PC-9 (cell line): ENCODE measurements at regions of chr4 and their contacts with region 1.

Region 1: DNA sequence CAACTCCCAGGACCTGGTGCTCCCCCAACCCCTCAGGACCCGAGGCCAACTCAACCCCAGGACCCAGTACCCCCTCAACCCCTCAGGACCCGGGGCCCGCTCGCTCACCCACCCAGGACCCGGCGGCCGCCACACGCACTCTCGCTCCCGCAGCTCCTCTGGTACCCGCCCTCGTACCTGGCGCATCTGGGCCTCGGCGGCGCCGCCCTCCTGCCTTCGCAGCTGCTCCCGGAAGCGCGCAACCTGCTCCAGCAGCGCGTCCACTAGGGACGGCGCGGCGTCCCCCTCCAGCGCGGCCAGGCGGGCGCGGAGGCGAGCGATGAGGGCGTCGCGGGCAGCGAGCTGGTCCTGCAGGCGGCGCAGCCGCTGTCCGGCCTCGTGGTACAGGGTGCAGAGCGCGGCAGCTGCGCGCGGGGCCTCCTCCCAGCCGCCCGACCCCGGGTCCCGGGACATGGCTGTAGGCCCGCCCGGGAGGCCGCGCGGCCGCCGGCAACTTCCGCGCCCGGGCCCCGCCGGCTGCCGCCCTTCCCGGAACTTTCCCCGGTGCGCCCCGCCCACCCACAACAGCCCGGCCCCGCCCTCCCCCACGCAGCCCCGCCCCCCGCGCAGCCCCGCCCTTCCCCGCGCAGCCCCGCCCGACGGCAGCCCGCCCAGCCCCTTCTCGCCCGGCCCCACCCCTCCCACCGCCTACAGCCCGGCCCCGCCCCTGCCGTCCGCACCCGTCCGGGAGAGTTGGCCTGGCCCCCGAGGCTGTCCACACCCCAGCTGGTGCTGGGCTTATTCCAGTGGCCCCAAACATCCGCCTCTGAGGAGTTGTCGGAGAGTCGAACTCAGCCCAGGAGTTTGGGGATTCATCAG is at the start of gene TNIP2:
- DNase-seq: peak; percentile 62 to 81
- H3K4me3 ChIP-seq: peak within 1 kb of the TSS; percentile 61; the same call in 1 of the 2 replicates
- H3K27ac ChIP-seq: no peak within 1 kb of the TSS
- H3K4me1 ChIP-seq: peaks cover 6% of the 10 kb centered on the region; the same call in 1 of the 2 replicates
- H3K27me3 ChIP-seq: no peaks in the 10 kb centered on the region
- CTCF ChIP-seq: no peak
- total RNA-seq, gene TNIP2: 37.1 and 44.8 TPM in 2 replicates

Region 2: DNA sequence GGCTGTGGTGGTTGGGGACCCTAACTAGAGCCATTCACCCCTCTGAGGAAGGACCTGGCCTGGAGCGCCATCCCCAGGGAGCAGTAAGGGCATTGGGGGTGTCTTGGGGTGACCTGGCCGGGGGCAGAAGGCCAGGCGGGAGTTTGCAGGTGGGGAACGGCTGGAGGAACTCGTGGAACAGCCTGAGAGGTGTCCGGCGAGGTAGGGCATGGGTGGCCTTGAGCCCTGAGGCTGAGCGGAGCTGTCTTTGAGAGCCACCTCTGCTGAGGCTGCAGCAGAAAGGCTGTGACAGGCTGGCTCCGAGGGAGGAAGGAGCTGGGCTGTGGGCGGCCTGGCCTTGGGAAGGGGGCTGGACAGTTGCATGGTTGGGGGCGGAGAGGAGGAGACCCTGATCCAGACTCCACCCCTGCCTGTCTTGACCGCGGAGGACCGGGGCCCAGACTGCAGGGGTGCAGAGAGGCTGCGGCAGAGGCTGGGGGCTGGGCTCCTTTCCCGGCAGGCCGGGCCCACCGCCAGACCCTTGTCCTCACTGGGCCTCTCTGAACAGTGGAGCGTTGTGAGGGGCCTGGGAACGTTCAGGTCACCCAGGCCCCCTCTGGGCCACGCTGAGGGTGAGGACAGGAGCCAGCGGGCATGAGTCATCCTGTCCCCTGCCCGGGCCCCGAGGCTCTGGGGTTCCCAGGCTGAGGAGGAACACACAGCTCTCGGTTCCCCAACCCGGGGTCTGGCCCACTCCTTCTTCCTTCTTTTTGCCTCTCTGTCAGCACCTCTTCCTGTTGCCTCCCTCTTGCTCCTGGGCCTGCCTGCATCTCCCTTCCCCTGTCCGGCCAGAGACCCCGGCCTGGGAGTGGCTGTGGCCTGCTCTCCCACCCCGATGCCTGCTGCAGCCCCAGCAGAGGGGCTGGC is 44.9 kb after region 1 on chr4:
- CTCF ChIA-PET with region 1: no interaction called
- POLR2A ChIA-PET with region 1: no interaction called
- intact Hi-C with region 1: loop called (anchors 2 kb)
- DNase-seq: peak; percentile 51 to 73
- H3K4me3 ChIP-seq: no peak overlapping the region
- H3K27ac ChIP-seq: peak overlapping the region; percentile 51; the same call in 1 of the 2 replicates
- H3K4me1 ChIP-seq: peaks cover 77% of the 10 kb centered on the region
- H3K27me3 ChIP-seq: no peaks in the 10 kb centered on the region
- CTCF ChIP-seq: no peak